ENCODE measurements at regions of chr5 and their contacts with region 1.

Region 1: GRCh38 chr5:141512390-141512910 is 23.6 kb downstream of the PCDHGC5 start:
- DNase-seq: peak; percentile 90
- H3K4me3 ChIP-seq: peak overlapping the region; percentile 65
- H3K27ac ChIP-seq: peak overlapping the region; percentile 99
- H3K4me1 ChIP-seq: peaks cover 100% of the 10 kb centered on the region
- CTCF ChIP-seq: peak; percentile 98

Region 2: GRCh38 chr5:141430332-141431113 is 81.9 kb before region 1 on chr5 and contains the start of gene PCDHGA12:
- CTCF ChIA-PET with region 1: interaction called, 10 read pairs
- POLR2A ChIA-PET with region 1: interaction called, 3 read pairs
- intact Hi-C with region 1: no loop called
- DNase-seq: peak; percentile 76
- H3K4me3 ChIP-seq: no peak within 1 kb of the TSS
- H3K27ac ChIP-seq: no peak within 1 kb of the TSS
- H3K4me1 ChIP-seq: no peaks in the 10 kb centered on the region
- CTCF ChIP-seq: peak; percentile 85
- total RNA-seq, gene PCDHGA12: 2.6 and 3.9 TPM in 2 replicates

Region 3: DNA sequence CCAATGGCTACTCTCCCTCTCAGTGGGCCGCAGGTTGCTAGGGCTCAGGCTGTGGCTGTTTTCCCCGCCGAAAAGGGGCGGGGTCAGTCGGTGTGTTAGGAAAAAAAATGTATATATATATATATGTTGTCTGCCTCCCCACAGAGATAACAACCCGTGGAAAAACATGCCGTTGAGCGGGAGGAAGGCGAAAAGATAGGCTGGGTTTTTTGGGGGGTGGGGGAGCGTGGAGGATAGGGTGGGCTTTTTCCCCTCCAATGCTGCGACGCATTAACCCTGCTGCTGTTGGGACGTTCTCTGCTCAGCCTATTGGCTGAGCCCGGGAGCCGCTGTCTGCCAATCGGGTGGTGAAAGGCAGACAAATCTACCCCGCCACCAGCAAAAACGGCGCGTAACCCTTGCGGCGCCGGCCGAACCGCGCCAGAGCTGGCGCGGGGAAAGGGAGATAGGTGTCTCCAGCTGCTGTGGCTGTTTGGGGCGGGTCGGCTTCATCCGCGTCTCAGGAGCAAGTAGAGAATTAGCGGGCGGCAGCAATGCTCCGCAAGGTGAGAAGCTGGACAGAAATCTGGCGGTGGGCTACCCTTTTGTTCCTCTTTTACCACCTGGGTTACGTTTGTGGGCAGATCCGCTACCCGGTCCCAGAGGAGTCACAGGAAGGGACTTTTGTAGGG is 27.7 kb before region 1 on chr5 and contains the start of gene PCDHGC4:
- CTCF ChIA-PET with region 1: interaction called, 6 read pairs
- POLR2A ChIA-PET with region 1: interaction called, 109 read pairs
- intact Hi-C with region 1: loop called (anchors 1 kb)
- DNase-seq: peak; percentile 54
- H3K4me3 ChIP-seq: peak within 1 kb of the TSS; percentile 64
- H3K27ac ChIP-seq: peak within 1 kb of the TSS; percentile 20
- H3K4me1 ChIP-seq: peaks cover 64% of the 10 kb centered on the region
- CTCF ChIP-seq: no peak
- total RNA-seq, gene PCDHGC4: 6.3 and 8.4 TPM in 2 replicates

Region 4: DNA sequence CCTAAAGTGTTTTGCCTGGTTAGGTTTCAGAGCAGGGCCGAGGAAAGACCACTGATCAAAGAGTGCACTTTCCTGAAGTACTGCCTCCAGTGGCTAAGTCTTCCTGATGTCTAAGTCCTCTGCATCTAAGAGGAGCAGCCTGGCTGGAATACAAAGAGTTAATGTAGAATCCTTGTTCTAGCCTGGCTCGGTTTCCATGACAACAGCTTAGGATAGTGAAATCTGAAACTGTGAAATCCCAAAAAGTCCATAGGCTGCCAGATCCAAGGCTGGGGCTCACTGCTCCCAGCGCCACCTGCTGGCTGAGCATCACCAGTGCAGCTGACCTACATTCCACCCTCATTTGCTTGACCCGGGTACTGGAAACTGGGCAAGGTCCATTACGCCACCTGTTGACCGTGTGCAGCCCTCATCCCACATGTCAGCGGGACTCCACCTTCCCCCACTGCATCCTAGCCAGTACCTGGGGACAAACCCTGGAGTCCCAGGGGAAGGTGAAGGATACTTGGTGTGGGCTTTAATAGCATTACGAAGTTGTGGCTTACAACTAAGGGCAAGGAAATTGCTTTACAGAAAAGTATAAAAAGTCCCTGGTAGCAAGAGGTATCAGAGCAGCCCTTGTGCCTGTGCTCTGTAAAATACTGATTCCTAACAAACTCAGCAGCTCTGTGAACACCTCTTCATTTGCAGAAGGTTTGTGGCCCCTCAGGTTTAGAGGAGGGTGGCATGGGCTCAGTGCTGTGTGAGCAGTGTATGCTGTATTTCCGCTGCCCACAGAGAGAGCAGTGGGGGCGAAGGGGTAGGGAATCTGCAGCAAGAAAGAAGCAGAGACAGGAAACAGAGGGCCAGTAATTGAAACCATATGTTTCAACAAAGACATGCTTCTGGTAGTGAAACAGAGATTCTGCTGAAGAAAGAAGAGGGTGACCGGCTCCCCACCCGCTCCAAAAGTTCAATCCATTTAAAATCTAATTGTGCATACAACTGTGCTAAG is 12.5 kb after region 1 on chr5:
- CTCF ChIA-PET with region 1: interaction called, 138 read pairs
- POLR2A ChIA-PET with region 1: interaction called, 328 read pairs
- intact Hi-C with region 1: loop called (anchors 1 kb)
- DNase-seq: peak; percentile 77
- H3K4me3 ChIP-seq: peak overlapping the region; percentile 42
- H3K27ac ChIP-seq: peak overlapping the region; percentile 98
- H3K4me1 ChIP-seq: peaks cover 84% of the 10 kb centered on the region
- CTCF ChIP-seq: peak; percentile 100

Region 5: DNA sequence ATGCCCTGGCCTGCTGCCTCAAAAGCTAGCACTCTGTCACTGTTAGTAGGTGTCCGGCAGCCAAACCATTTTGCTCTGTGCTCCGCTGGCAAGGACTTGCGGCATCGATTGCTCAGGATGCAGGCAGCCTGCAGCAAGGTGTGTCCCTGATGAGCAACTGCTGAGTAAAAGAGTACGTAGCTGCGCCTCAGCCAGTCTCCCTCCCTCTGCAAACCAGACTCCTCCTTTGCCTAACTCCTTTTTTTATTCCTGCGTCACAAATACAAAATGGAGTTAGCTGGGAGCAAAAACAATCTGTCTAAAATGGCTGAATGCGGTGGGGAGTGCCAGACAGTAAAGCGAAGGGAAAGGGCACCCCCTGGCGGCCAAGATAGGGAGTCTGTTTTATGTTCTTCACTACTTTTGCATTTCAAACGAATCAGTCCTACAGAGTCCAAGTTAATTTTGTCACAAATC is 45.3 kb after region 1 on chr5:
- CTCF ChIA-PET with region 1: interaction called, 11 read pairs
- POLR2A ChIA-PET with region 1: interaction called, 8 read pairs
- intact Hi-C with region 1: loop called (anchors 2 kb)
- DNase-seq: peak; percentile 86
- H3K4me3 ChIP-seq: no peak overlapping the region
- H3K27ac ChIP-seq: peak overlapping the region; percentile 36
- H3K4me1 ChIP-seq: peaks cover 30% of the 10 kb centered on the region
- CTCF ChIP-seq: peak; percentile 99

Region 6: GRCh38 chr5:141618804-141619554 is 106.5 kb after region 1 on chr5 and contains the start of gene DIAPH1:
- CTCF ChIA-PET with region 1: no interaction called
- POLR2A ChIA-PET with region 1: no interaction called
- intact Hi-C with region 1: loop called (anchors 10 kb)
- DNase-seq: peak; percentile 98
- H3K4me3 ChIP-seq: peak within 1 kb of the TSS; percentile 98
- H3K27ac ChIP-seq: peak within 1 kb of the TSS; percentile 63
- H3K4me1 ChIP-seq: peaks cover 54% of the 10 kb centered on the region
- CTCF ChIP-seq: peak; percentile 97
- total RNA-seq, gene DIAPH1: 64.9 and 78.8 TPM in 2 replicates

Region 7: DNA sequence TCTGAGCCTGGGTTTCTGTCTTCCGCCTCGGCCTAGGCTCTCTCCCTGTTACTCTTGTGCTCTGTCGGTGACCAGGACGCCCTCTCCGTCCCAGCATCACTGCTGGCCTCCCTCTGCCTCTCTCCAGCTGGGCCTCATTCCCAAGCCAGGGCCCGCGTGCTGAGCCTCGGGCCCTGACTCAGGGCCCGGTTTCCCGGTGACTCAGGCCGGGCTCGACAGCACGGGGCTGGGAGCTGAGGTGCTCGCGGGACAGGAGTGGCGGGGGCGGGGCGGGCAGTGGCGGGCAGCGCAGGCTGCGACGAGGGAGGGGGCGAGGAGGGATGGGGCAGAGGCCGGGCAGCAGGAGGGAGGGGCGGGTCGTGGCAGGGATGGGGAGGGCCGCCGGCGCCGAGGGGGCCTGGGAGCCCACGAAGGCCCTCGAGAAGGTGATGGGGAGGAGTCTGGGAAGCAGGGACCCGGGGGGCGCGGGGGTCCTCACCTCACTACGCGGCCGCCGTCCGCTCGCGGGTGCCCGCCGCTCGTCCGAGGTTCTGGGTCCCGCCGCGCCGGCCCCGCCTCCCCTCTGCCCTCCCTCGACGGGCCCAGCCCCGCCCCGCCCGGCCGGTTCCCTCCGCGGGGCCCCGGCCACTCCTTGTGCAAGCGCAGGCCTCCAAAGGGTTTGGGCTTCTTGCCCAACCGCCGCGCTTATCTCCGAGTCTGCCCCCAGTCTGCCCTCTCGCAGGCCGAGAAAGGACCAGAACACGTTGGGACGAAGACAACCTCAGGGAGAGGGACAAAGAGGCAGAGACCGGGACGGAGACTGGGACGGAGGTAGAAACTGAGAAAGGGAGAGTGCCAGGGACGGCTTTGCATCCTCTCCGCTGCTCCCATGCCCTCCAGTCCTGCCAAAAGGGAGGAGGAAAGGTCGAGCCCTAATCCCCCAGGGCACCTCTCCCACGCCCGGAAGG is 169.5 kb after region 1 on chr5 and contains the start of gene ARAP3:
- CTCF ChIA-PET with region 1: no interaction called
- POLR2A ChIA-PET with region 1: no interaction called
- intact Hi-C with region 1: no loop called
- DNase-seq: no peak
- H3K4me3 ChIP-seq: no peak within 1 kb of the TSS
- H3K27ac ChIP-seq: no peak within 1 kb of the TSS
- H3K4me1 ChIP-seq: peaks cover 5% of the 10 kb centered on the region
- CTCF ChIP-seq: no peak
- total RNA-seq, gene ARAP3: not detected in 2 replicates

Region 8: GRCh38 chr5:141846031-141846430 is 333.6 kb after region 1 on chr5:
- CTCF ChIA-PET with region 1: no interaction called
- POLR2A ChIA-PET with region 1: no interaction called
- intact Hi-C with region 1: no loop called
- DNase-seq: no peak
- H3K4me3 ChIP-seq: no peak overlapping the region
- H3K27ac ChIP-seq: no peak overlapping the region
- H3K4me1 ChIP-seq: peaks cover 80% of the 10 kb centered on the region
- CTCF ChIP-seq: no peak

Measured in OCI-LY7 (cell line).